ENCODE measurements at regions of chr4 and their contacts with region 1.

Region 1: DNA sequence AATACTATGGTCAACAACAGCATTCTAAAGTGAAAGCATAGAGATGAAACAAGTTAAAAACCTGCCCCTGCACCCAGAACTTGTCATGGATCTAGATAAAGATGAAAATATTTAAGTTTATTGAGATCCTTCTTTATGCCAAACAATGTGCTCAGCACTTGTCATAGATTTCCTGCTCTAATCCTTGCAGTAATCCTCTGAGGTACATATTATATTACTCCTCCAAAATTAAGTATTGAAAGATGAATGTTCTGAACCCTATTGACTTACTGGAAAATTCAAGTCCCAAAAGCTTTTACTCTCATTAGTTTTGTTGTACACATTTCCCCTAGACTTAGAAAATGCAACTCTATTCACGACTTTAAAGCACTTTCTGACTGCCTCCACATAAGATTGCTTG is 35.6 kb downstream of the CAMK2D start:
- DNase-seq: no peak
- ATAC-seq: no peak
- H3K4me3 ChIP-seq: no peak overlapping the region
- H3K27ac ChIP-seq: no peak overlapping the region
- H3K4me1 ChIP-seq: peaks cover 5% of the 10 kb centered on the region; the same call in 1 of the 2 replicates
- H3K27me3 ChIP-seq: no peaks in the 10 kb centered on the region
- CTCF ChIP-seq: no peak

Region 2: GRCh38 chr4:113657586-113658233 is 68.3 kb before region 1 on chr4:
- CTCF ChIA-PET with region 1: no interaction called
- POLR2A ChIA-PET with region 1: interaction called, 17 read pairs
- in situ Hi-C with region 1: no loop called
- intact Hi-C with region 1: no loop called
- DNase-seq: no peak
- ATAC-seq: no peak
- H3K4me3 ChIP-seq: no peak overlapping the region
- H3K27ac ChIP-seq: no peak overlapping the region
- H3K4me1 ChIP-seq: no peaks in the 10 kb centered on the region; the same call in 1 of the 2 replicates
- H3K27me3 ChIP-seq: no peaks in the 10 kb centered on the region
- CTCF ChIP-seq: no peak

Region 3: GRCh38 chr4:113692809-113693411 is 33.1 kb before region 1 on chr4:
- CTCF ChIA-PET with region 1: no interaction called
- POLR2A ChIA-PET with region 1: no interaction called
- in situ Hi-C with region 1: no loop called
- intact Hi-C with region 1: no loop called
- DNase-seq: no peak
- ATAC-seq: no peak
- H3K4me3 ChIP-seq: no peak overlapping the region
- H3K27ac ChIP-seq: no peak overlapping the region
- H3K4me1 ChIP-seq: peaks cover 4% of the 10 kb centered on the region
- H3K27me3 ChIP-seq: no peaks in the 10 kb centered on the region
- CTCF ChIP-seq: no peak

Region 4: DNA sequence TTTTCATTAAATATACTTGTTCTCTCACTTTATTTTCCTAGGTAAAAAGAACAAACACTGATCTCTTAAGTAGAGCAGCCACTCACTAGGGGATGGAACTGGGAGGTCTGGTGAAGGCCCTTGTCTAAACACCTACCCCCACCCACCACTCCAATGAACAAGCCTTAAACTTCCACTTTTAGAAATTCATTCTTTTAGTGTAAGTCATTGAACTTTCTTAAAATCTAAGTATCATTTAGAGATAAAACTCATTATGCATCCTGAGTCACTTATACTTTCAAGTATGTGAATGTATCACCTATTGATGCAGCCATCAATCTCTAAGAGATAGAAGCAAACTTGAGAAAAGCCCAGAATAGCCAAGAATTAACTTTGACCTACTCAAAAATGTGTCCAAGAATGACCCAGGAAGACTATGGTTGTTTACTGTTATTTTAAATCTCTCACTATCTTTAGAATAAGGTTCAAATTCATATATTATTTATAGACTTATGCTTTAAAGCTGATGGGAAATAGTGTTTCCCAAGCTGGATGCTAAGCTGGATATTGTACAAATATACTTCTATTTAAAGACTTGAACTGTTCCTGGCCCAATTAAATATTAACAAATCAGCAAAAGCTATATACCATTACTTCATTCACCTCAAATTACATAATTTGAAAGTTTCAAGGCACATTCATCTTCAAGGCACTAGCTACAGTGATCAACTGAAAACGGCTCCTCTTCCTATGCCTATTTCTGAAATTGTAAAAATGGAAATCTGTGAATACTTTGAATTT is 13.9 kb before region 1 on chr4:
- CTCF ChIA-PET with region 1: no interaction called
- POLR2A ChIA-PET with region 1: interaction called, 12 read pairs
- in situ Hi-C with region 1: no loop called
- intact Hi-C with region 1: no loop called
- DNase-seq: no peak
- ATAC-seq: no peak
- H3K4me3 ChIP-seq: no peak overlapping the region
- H3K27ac ChIP-seq: no peak overlapping the region
- H3K4me1 ChIP-seq: peaks cover 2% of the 10 kb centered on the region; the same call in 1 of the 2 replicates
- H3K27me3 ChIP-seq: no peaks in the 10 kb centered on the region
- CTCF ChIP-seq: no peak